ENCODE measurements at regions of chr2 and their contacts with region 1.

Region 1: DNA sequence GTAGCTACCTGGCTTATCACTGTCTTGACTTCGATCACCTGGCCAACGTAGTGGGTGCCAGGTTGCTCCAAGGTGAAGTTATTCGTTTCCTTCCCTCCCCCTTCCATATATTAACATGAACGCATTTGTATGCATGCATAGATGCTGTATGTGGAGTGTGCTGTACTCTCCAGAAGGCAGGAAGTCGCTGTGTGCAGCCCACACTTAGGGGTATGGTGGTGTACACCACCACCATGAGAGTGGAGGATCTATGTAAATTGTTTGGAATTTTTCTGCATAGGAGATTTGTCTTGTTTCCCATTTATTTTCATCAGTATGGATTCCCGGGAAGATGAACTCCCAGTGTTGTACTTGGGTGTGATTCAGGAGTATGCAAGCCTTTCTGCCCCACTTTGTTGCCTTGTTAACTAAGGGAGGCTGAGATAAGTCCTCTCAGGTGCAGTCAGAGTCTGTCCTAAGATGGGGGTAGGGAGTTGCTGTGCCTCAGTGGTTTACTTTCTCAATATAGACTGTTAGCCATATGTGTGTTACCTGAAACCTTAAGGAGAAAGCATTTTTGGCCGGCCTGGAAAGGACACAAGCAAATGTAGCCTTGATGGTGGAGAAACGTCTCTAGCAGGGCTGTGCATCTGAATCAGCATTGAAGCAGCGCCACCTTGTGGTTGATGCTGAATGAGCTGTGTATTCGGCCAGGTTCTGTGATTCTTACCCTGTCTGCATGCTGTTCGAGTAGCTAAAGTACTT is 149.8 kb downstream of the TANC1 start:
- DNase-seq: peak; percentile 62 to 93 (median 82)
- ATAC-seq: peak; percentile 92 to 98 (median 96)
- H3K4me3 ChIP-seq: no peak overlapping the region
- H3K27ac ChIP-seq: no peak overlapping the region
- H3K4me1 ChIP-seq: no peaks in the 10 kb centered on the region
- H3K27me3 ChIP-seq: no peaks in the 10 kb centered on the region
- CTCF ChIP-seq: peak; percentile 72 to 90 (median 86)

Region 2: GRCh38 chr2:158903711-158904443 is 214.4 kb before region 1 on chr2:
- intact Hi-C with region 1: loop called (anchors 5 to 10 kb)
- DNase-seq: no peak
- ATAC-seq: no peak
- H3K4me3 ChIP-seq: no peak overlapping the region
- H3K27ac ChIP-seq: no peak overlapping the region
- H3K4me1 ChIP-seq: no peaks in the 10 kb centered on the region
- H3K27me3 ChIP-seq: no peaks in the 10 kb centered on the region
- CTCF ChIP-seq: no peak

Region 3: GRCh38 chr2:158914731-158915130 is 203.6 kb before region 1 on chr2:
- intact Hi-C with region 1: loop called in 1 of 3 experiments (anchors 5 kb)
- DNase-seq: no peak
- ATAC-seq: no peak
- H3K4me3 ChIP-seq: no peak overlapping the region
- H3K27ac ChIP-seq: no peak overlapping the region
- H3K4me1 ChIP-seq: no peaks in the 10 kb centered on the region
- H3K27me3 ChIP-seq: no peaks in the 10 kb centered on the region
- CTCF ChIP-seq: no peak

Region 4: GRCh38 chr2:159044804-159045286 is 73.4 kb before region 1 on chr2:
- intact Hi-C with region 1: loop called in 1 of 3 experiments (anchors 10 kb)
- DNase-seq: no peak
- ATAC-seq: peak; percentile 51 to 63 (median 59)
- H3K4me3 ChIP-seq: no peak overlapping the region
- H3K27ac ChIP-seq: peak overlapping the region in 1 of 4 donors; percentile 1
- H3K4me1 ChIP-seq: peaks cover 7 to 15% (median 8%) of the 10 kb centered on the region in 3 donors
- H3K27me3 ChIP-seq: no peaks in the 10 kb centered on the region
- CTCF ChIP-seq: no peak